OCI-LY7 (cell line): ENCODE measurements at regions of chr12 and their contacts with region 1.

Region 1: GRCh38 chr12:106357549-106358395 is at the start of gene POLR3B:
- DNase-seq: peak; percentile 97
- H3K4me3 ChIP-seq: peak within 1 kb of the TSS; percentile 80
- H3K27ac ChIP-seq: peak within 1 kb of the TSS; percentile 62
- H3K4me1 ChIP-seq: peaks cover 12% of the 10 kb centered on the region
- CTCF ChIP-seq: peak; percentile 89
- total RNA-seq, gene POLR3B: 14.7 and 18.1 TPM in 2 replicates

Region 2: GRCh38 chr12:106247674-106248311 is 110.0 kb before region 1 on chr12 and contains the start of gene CKAP4:
- CTCF ChIA-PET with region 1: interaction called, 3 read pairs
- POLR2A ChIA-PET with region 1: interaction called, 4 read pairs
- intact Hi-C with region 1: loop called (anchors 5 kb)
- DNase-seq: peak; percentile 74
- H3K4me3 ChIP-seq: peak within 1 kb of the TSS; percentile 84
- H3K27ac ChIP-seq: peak within 1 kb of the TSS; percentile 95
- H3K4me1 ChIP-seq: peaks cover 63% of the 10 kb centered on the region
- CTCF ChIP-seq: no peak
- total RNA-seq, gene CKAP4: 17.5 and 18.9 TPM in 2 replicates

Region 3: GRCh38 chr12:106369607-106370346 is 12.0 kb after region 1 on chr12:
- CTCF ChIA-PET with region 1: no interaction called
- POLR2A ChIA-PET with region 1: interaction called, 11 read pairs
- intact Hi-C with region 1: no loop called
- DNase-seq: no peak
- H3K4me3 ChIP-seq: no peak overlapping the region
- H3K27ac ChIP-seq: no peak overlapping the region
- H3K4me1 ChIP-seq: no peaks in the 10 kb centered on the region
- CTCF ChIP-seq: no peak

Region 4: DNA sequence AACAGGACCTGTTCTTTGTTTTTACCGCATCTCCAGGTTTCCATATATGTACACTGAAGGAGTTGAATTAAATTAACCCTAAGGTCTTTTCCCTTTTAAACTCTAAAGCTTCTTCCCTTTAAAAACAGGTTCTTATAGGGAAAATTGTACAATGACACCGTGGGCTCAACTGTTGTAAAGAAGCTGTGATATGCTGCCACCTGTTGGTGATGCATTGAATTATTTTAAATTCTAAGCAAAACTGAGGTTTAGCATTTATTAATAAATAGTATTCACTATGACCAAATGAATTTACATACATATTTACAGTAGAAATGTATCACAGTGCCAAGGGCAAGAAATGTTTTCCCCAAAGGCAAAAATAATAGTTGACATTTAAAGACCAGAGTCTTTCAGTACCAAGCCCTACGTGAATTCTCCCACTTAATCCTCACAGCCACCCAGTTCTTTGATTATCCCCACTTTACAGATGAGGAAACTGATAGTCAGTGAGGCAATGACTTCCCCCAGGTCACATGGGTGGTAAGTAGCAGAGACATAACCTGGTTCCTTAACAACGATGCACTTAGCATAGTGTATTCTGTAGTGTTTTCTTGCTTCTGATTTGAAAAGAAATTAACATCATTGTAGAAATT is 562.3 kb after region 1 on chr12:
- CTCF ChIA-PET with region 1: no interaction called
- POLR2A ChIA-PET with region 1: interaction called, 3 read pairs
- intact Hi-C with region 1: loop called (anchors 10 kb)
- DNase-seq: peak; percentile 57
- H3K4me3 ChIP-seq: no peak overlapping the region
- H3K27ac ChIP-seq: no peak overlapping the region
- H3K4me1 ChIP-seq: no peaks in the 10 kb centered on the region
- CTCF ChIP-seq: peak; percentile 92